AG04449 (cell line): ENCODE measurements at regions of chr17 and their contacts with region 1.

Region 1: DNA sequence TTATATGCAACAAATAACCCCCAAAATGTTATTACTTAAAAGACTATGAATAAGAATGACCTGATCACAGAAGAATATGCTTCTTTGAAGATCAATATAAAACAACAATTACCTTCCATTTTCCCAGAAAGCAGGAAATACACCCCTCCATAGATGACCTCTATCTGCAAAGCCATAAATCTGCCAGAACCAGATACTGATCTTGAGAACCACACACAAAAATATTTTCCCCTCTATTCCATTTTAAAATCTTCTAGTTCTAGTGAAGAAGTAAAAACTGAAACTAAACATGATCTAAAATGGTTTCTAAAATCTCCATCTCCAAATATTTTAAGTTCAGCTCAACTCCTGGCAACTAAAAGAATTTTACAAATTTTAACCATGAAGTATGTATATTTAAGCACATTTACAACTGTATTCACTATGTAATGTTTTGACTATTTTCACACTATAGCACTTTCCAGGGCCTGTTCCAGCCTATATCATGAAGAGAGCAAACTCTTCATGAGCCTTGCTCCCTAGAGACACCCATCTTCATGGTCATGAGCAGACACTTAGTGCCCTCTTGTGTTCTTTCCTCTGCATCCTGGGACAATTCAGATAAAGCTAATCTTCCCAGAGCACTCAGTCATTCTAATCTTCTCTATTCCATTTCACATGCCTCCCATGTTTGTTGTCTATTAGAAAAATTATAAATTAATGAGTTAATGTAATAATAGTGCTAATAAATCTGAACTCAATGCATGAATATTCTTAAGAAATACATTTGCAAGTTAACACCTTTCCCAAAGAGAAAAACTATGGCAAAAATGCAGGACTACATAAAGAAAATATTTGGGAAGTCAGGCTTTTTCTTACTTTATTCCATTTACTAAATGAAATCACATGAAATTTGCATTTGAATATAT is 87.0 kb downstream of the HELZ start:
- DNase-seq: no peak
- H3K4me3 ChIP-seq: no peak overlapping the region
- CTCF ChIP-seq: peak; percentile 34

Region 2: DNA sequence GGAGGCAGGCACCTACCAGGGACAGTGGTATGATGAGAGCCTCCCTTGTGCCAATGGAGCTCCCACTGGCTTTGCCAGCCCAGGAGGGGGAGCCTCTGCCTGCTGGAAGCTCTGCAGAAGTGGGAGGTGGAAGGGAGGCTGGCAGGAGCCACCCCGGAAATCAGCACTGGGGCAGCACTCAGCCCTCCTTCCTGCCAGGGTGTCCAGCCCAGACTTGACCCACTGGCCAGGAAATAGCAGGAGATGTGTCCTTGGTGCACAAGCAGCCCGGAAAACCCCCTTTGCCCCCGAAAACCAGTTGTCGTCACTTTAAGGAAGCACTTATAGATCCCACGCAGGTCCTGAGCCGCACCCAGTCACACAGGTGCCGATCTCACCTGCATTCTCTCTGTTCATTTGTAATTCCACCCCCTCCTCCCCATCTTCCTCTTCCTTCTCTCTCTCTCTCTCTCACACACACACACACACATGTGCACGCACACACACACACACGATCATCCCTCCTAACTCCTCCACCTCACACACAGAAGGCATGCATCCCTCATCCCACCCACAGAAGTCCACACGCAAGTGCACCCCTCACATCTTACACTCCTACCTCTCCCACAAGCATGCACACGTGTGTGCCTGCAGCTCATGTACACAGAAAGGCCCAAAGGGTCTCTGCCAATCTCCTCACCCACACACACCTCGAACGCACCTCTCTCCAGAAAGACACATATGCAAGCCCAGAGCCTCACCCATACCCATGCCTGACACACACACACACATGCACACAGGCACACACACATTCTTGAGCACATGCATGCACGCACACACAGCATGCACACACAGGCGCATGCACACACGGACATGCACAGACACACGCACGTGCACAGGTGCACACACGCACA is 242.5 kb before region 1 on chr17:
- CTCF ChIA-PET with region 1: interaction called, 21 read pairs
- POLR2A ChIA-PET with region 1: no interaction called
- DNase-seq: no peak
- H3K4me3 ChIP-seq: no peak overlapping the region
- CTCF ChIP-seq: peak; percentile 59

Region 3: GRCh38 chr17:67168496-67168895 is 10.5 kb after region 1 on chr17:
- CTCF ChIA-PET with region 1: interaction called, 17 read pairs
- POLR2A ChIA-PET with region 1: no interaction called
- DNase-seq: no peak
- H3K4me3 ChIP-seq: no peak overlapping the region
- CTCF ChIP-seq: no peak

Region 4: GRCh38 chr17:67180275-67180674 is 22.3 kb after region 1 on chr17:
- CTCF ChIA-PET with region 1: no interaction called
- POLR2A ChIA-PET with region 1: no interaction called
- DNase-seq: no peak
- H3K4me3 ChIP-seq: no peak overlapping the region
- CTCF ChIP-seq: no peak